ENCODE measurements at regions of chr19 and their contacts with region 1.

Region 1: DNA sequence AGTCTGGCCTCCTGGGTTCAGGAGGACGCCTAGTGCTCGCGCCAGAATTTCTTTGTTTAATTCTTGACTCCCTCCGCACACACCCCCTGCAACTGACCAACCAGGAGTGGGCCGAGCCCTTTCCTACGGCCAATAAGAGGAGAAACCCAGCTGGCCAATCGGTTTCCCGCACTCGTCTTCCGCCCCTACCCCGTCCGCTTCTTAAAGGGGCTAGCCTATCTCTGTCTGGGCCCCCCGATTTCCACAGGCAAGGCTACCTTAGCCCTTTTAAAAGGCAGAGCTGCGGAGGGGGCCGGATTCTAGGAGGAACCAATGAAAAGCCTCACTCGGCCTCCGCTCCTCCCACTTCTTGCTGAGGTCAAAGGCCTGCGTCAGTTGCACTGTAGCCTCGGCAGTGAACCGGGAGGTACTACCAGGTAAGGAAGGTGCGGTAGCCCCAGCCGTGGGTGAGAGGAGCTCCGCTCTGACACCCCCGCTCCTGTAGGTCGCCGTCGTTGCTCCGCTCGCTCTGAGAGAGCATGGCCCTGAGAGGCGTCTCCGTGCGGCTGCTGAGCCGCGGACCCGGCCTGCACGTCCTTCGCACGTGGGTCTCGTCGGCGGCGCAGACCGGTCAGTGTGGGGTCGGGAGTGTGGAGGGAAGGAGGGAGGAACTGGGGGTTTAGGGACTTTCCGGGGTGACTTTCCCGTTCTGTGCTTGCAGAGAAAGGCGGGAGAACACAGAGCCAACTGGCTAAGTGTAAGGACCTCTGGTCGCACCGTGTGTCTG is at the start of gene GCDH:
- DNase-seq: peak; percentile 98
- ATAC-seq: peak; percentile 99
- H3K4me3 ChIP-seq: peak within 1 kb of the TSS; percentile 78
- H3K27ac ChIP-seq: peak within 1 kb of the TSS; percentile 3; the same call in 1 of the 2 replicates
- H3K4me1 ChIP-seq: peaks cover 6% of the 10 kb centered on the region
- H3K27me3 ChIP-seq: peaks cover 21% of the 10 kb centered on the region
- CTCF ChIP-seq: no peak
- POLR2A ChIP-seq: no peak
- RAD21 ChIP-seq: no peak
- total RNA-seq, gene GCDH: 41.1 and 41.6 TPM in 2 replicates

Region 2: GRCh38 chr19:11597202-11598102 is 1293.5 kb before region 1 on chr19 and contains the start of gene ZNF627:
- CTCF ChIA-PET with region 1: no interaction called
- POLR2A ChIA-PET with region 1: interaction called, 10 read pairs
- dilution Hi-C with region 1: no loop called
- in situ Hi-C with region 1: no loop called
- intact Hi-C with region 1: no loop called
- DNase-seq: peak; percentile 98
- ATAC-seq: peak; percentile 100
- H3K4me3 ChIP-seq: peak within 1 kb of the TSS; percentile 99
- H3K27ac ChIP-seq: peak within 1 kb of the TSS; percentile 100
- H3K4me1 ChIP-seq: no peaks in the 10 kb centered on the region; the same call in 1 of the 2 replicates
- H3K27me3 ChIP-seq: no peaks in the 10 kb centered on the region
- CTCF ChIP-seq: 0 out of 2 replicates have a peak, but pooled peaks have one; percentile 16
- POLR2A ChIP-seq: peak; percentile 96
- RAD21 ChIP-seq: no peak; the same call in 1 of the 2 replicates
- total RNA-seq, gene ZNF627: 32.8 and 34.4 TPM in 2 replicates

Region 3: GRCh38 chr19:12994701-12995595 is 104.0 kb after region 1 on chr19 and contains the start of gene NFIX:
- CTCF ChIA-PET with region 1: no interaction called
- POLR2A ChIA-PET with region 1: no interaction called
- dilution Hi-C with region 1: no loop called
- in situ Hi-C with region 1: no loop called
- intact Hi-C with region 1: no loop called
- DNase-seq: peak; percentile 39
- ATAC-seq: peak; percentile 74
- H3K4me3 ChIP-seq: peak within 1 kb of the TSS; percentile 93
- H3K27ac ChIP-seq: peak within 1 kb of the TSS; percentile 76
- H3K4me1 ChIP-seq: peaks cover 13% of the 10 kb centered on the region
- H3K27me3 ChIP-seq: no peaks in the 10 kb centered on the region
- CTCF ChIP-seq: no peak
- POLR2A ChIP-seq: no peak
- RAD21 ChIP-seq: no peak
- total RNA-seq, gene NFIX: 10.0 and 10.2 TPM in 2 replicates

Region 4: DNA sequence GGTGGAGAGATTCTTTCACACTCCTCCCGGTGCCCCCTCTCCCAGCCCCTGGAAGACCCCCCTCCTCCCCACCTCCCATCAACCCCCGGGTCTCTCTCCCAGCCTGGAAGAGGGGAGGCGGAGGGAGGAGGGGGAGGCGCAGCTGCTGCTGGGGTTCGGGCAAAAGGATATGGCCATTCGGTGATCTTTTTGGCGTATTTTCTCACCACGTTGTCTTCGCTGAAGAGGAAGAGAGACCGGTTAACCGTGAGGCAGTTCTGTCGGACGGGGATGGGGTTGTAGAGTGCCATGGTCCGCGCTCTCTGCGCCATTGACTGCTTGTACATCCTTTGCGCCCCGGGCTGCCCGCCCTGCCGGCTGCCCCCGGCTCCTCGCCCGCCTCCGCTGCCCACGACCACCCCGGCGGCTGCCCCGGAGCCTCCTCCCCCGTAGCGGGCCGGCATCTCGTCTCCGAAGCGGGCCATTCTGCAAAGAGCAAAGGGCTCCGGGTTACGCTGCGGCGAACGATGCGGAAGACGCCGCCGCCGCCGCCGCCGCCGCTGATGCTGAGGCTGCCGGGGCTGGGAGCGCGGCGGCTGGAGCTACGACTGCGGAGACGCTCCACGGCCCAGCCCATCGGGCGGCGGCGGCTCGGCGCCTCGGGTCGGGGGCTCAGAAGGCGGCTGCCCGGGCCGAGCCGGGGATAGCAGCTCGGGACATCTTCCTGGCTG is 614.9 kb after region 1 on chr19:
- CTCF ChIA-PET with region 1: no interaction called
- POLR2A ChIA-PET with region 1: no interaction called
- dilution Hi-C with region 1: no loop called
- in situ Hi-C with region 1: no loop called
- intact Hi-C with region 1: no loop called
- DNase-seq: peak; percentile 19
- ATAC-seq: peak; percentile 75
- H3K4me3 ChIP-seq: peak overlapping the region; percentile 74
- H3K27ac ChIP-seq: peak overlapping the region; percentile 41; the same call in 1 of the 2 replicates
- H3K4me1 ChIP-seq: peaks cover 3% of the 10 kb centered on the region; the same call in 1 of the 2 replicates
- H3K27me3 ChIP-seq: peaks cover 21% of the 10 kb centered on the region
- CTCF ChIP-seq: no peak
- POLR2A ChIP-seq: no peak
- RAD21 ChIP-seq: no peak

Measured in IMR-90 (cell line).